Calu3 (cell line): ENCODE measurements at regions of chr9 and their contacts with region 1.

Region 1: GRCh38 chr9:109401168-109401989 is 80.5 kb upstream of the EPB41L4B start:
- DNase-seq: peak; percentile 61
- H3K4me3 Mint-ChIP-seq: no peak overlapping the region
- H3K27ac Mint-ChIP-seq: peak overlapping the region; percentile 67
- H3K4me1 Mint-ChIP-seq: no peaks in the 10 kb centered on the region
- H3K27me3 Mint-ChIP-seq: no peaks in the 10 kb centered on the region
- CTCF ChIP-seq: peak; percentile 66

Region 2: GRCh38 chr9:109182940-109183798 is 218.2 kb before region 1 on chr9:
- CTCF ChIA-PET with region 1: no interaction called
- intact Hi-C with region 1: loop called (anchors 10 kb)
- DNase-seq: peak; percentile 61
- H3K4me3 Mint-ChIP-seq: no peak overlapping the region
- H3K27ac Mint-ChIP-seq: no peak overlapping the region
- H3K4me1 Mint-ChIP-seq: no peaks in the 10 kb centered on the region
- H3K27me3 Mint-ChIP-seq: peaks cover 13% of the 10 kb centered on the region
- CTCF ChIP-seq: peak; percentile 54

Region 3: GRCh38 chr9:109244157-109245132 is 156.9 kb before region 1 on chr9:
- CTCF ChIA-PET with region 1: no interaction called
- intact Hi-C with region 1: loop called (anchors 2 kb)
- DNase-seq: peak; percentile 66
- H3K4me3 Mint-ChIP-seq: no peak overlapping the region
- H3K27ac Mint-ChIP-seq: no peak overlapping the region
- H3K4me1 Mint-ChIP-seq: no peaks in the 10 kb centered on the region
- H3K27me3 Mint-ChIP-seq: no peaks in the 10 kb centered on the region
- CTCF ChIP-seq: peak; percentile 86

Region 4: DNA sequence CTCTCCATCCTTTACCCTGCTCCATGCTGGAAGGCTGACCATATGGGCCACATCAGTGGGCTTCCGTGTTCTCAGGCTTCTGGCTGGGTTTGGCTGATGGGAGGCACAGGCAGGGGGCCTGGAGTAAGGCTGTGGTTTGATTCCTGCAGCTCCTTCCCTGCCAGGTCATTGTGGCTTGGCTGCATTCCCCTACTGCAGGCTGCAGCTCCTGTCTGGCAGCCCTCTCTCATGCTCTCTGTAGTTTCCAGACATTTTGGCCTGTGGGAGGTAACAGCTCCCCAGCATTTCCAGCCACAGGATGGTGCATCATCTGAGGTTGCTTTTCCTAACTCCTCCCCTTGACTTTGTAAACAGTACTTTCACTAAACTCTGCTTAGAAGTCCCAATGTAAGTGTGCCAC is 198.8 kb after region 1 on chr9:
- CTCF ChIA-PET with region 1: no interaction called
- intact Hi-C with region 1: no loop called
- DNase-seq: no peak
- H3K4me3 Mint-ChIP-seq: no peak overlapping the region
- H3K27ac Mint-ChIP-seq: no peak overlapping the region
- H3K4me1 Mint-ChIP-seq: no peaks in the 10 kb centered on the region
- H3K27me3 Mint-ChIP-seq: peaks cover 31% of the 10 kb centered on the region
- CTCF ChIP-seq: no peak

Region 5: DNA sequence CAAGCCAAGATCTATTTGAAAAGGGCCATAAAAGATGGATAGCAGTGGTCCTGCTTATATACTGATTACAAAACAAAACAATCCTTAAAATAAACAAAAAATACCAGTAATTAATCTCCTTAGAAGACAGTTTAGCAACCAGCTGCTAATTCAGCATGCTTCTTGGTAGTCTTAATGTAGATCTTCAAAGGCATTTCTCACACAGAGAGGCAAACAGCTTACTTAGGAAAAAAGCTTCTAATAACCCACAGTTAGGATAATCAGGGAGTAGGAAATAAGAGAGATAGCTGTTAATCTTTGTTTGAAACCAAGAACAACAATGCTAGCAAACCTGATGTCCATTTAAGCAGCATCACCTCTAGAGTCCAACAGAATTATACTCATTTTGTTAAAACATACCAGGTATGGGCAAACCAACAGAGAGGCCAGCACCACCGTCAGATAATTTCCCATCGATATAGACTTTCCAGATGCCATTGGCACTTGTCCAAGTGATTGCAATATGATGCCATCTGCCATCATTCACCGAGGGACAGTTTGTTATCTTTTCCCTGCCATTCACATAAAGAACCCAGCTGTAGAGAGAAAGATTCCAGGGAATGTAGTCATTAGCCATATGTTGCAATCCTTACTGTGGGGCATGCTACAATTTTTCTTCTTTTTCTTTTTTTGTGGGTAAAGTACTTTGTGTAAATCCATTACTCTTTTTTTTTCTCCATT is 1041.9 kb after region 1 on chr9:
- CTCF ChIA-PET with region 1: no interaction called
- intact Hi-C with region 1: no loop called
- DNase-seq: no peak
- H3K4me3 Mint-ChIP-seq: no peak overlapping the region
- H3K27ac Mint-ChIP-seq: no peak overlapping the region
- H3K4me1 Mint-ChIP-seq: no peaks in the 10 kb centered on the region
- H3K27me3 Mint-ChIP-seq: peaks cover 18% of the 10 kb centered on the region
- CTCF ChIP-seq: no peak